Kidney (tissue), 22 donors: ENCODE measurements at regions of chr20 and their contacts with region 1.

Region 1: DNA sequence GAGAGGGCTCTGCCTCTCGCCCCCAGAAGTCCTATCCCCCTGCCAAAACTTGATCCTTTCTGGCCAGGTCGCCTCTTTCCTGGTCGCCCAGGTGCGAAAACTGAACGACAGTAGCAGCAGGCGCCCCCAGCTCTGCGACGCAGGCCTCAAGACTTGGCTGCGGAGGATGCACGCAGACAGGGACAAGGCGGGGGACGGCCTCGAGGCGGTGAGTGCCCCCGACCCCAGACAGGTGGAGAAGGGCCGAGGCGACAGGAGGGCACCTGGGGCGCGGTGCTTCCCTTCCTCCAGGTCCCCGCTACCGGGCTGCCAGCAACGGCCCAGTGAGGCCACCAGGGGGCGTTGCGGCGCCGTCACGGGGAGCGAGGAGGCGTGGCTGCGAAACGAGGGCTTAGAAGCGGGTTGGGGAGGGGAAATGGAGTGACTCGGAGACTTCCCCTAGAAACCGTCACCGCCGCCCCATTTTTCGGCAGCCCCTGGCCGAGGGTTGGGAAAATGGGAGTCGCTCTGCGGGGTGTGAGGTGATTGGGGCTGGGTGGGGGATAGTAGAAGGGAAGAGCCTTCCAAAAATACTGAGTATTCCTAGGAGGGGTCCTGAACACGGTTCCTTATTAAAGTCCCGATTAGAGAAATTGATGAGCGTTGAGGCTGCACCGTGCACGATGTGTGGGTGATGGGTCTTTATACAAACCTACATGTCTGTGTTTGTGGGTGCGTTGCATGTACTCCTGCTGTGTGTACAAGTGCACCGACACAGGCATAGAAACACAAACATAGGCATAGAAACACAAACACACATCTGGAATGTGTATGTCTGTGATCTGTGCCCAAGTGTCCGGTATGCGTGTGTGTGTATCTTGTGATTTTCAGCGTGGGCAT is 44.6 kb downstream of the ARHGAP40 start:
- DNase-seq: peak; percentile 74 to 90 (median 85)
- H3K4me3 ChIP-seq: peak overlapping the region in 2 of 3 donors; percentile 7 to 41
- H3K27ac ChIP-seq: no peak overlapping the region
- H3K4me1 ChIP-seq: peaks cover 0 to 4% (median 4%) of the 10 kb centered on the region in 3 donors
- H3K27me3 ChIP-seq: peaks cover 3% of the 10 kb centered on the region
- CTCF ChIP-seq: peak; percentile 91

Region 2: GRCh38 chr20:38751360-38751976 is 105.2 kb after region 1 on chr20:
- intact Hi-C with region 1: loop called (anchors 10 kb)
- DNase-seq: peak in 3 of 5 donors; percentile 23 to 59 (median 48)
- H3K4me3 ChIP-seq: no peak overlapping the region
- H3K27ac ChIP-seq: no peak overlapping the region
- H3K4me1 ChIP-seq: peaks cover 3 to 10% (median 8%) of the 10 kb centered on the region in 3 donors
- H3K27me3 ChIP-seq: no peaks in the 10 kb centered on the region
- CTCF ChIP-seq: peak; percentile 63

Region 3: DNA sequence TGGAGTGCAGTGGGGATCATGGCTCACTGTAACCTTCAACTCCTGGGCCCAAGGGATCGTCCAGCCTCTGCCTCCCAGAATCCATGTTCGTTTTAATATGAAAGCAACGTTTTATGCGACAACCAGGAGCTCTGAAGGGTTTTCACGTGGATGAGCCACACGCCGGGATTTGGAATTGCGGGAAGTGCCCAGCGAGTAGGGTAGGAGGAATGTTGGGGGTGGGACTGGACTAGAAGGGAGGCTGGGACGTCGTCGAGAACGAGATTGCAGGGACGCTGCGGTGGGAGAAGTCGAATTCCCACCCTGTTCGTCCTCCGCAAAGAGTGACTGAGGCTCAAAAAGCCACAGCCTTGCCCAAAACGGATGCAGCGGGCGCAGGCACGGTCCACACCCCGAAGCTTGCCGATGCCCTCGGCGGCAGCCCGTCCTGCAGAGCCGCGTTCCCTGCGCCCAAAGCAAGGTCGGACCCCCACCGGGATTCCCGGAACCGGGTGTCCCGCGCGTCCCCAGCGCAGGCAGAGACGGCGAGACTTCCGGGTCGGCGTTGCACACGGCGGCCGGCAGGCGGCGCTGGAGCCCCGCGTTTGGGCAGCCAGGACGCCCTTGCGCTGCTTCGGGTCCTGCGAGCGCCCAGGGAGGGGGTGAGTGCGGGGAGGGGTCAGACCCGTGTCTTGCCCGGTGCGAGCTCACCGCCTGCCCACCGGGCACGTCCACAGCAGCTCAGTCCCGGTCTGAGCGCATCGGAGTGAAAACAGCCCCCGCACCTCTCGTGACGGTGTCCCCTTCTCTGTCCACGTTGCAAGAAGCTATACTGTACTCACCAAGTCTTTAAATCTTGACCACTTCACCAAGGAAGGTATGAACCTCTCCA is 403.7 kb after region 1 on chr20:
- intact Hi-C with region 1: loop called (anchors 10 kb)
- DNase-seq: peak; percentile 78 to 91 (median 86)
- H3K4me3 ChIP-seq: peak overlapping the region; percentile 56 to 93 (median 90)
- H3K27ac ChIP-seq: peak overlapping the region in 1 of 2 donors; percentile 46
- H3K4me1 ChIP-seq: peaks cover 0 to 7% (median 3%) of the 10 kb centered on the region in 3 donors
- H3K27me3 ChIP-seq: no peaks in the 10 kb centered on the region
- CTCF ChIP-seq: peak; percentile 97